ENCODE measurements at regions of chr19 and their contacts with region 1.

Region 1: GRCh38 chr19:47600246-47601179 is 8.4 kb upstream of the BICRA start:
- DNase-seq: peak; percentile 99 to 100
- H3K4me3 ChIP-seq: peak overlapping the region; percentile 55 to 69
- H3K27ac ChIP-seq: peak overlapping the region; percentile 74 to 84
- H3K4me1 ChIP-seq: peaks cover 0 to 13% of the 10 kb centered on the region in 2 donors
- H3K27me3 ChIP-seq: no peaks in the 10 kb centered on the region
- CTCF ChIP-seq: no peak

Region 2: GRCh38 chr19:46487802-46488445 is 1112.6 kb before region 1 on chr19:
- intact Hi-C with region 1: no loop called
- DNase-seq: peak in 1 of 2 donors; percentile 90
- H3K4me3 ChIP-seq: peak overlapping the region; percentile 56 to 67
- H3K27ac ChIP-seq: peak overlapping the region in 1 of 2 donors; percentile 51
- H3K4me1 ChIP-seq: peaks cover 11 to 19% of the 10 kb centered on the region in 2 donors
- H3K27me3 ChIP-seq: no peaks in the 10 kb centered on the region
- CTCF ChIP-seq: peak; percentile 93 to 99 (median 99)

Region 3: GRCh38 chr19:47273313-47273977 is 327.1 kb before region 1 on chr19:
- intact Hi-C with region 1: loop called (anchors 10 kb)
- DNase-seq: peak; percentile 77 to 97
- H3K4me3 ChIP-seq: peak overlapping the region; percentile 77 to 87
- H3K27ac ChIP-seq: peak overlapping the region; percentile 99
- H3K4me1 ChIP-seq: peaks cover 7 to 32% of the 10 kb centered on the region in 2 donors
- H3K27me3 ChIP-seq: no peaks in the 10 kb centered on the region
- CTCF ChIP-seq: no peak

Region 4: GRCh38 chr19:47573071-47574026 is 27.2 kb before region 1 on chr19 and contains the start of gene ZNF541:
- intact Hi-C with region 1: loop called (anchors 2 kb)
- DNase-seq: peak; percentile 11 to 82
- H3K4me3 ChIP-seq: peak within 1 kb of the TSS; percentile 46 to 62
- H3K27ac ChIP-seq: no peak within 1 kb of the TSS
- H3K4me1 ChIP-seq: peaks cover 0 to 4% of the 10 kb centered on the region in 2 donors
- H3K27me3 ChIP-seq: no peaks in the 10 kb centered on the region
- CTCF ChIP-seq: no peak
- total RNA-seq, gene ZNF541: not detected

Region 5: GRCh38 chr19:47663841-47664771 is 63.6 kb after region 1 on chr19:
- intact Hi-C with region 1: loop called (anchors 1 kb)
- DNase-seq: peak; percentile 73 to 95
- H3K4me3 ChIP-seq: peak overlapping the region in 1 of 2 donors; percentile 47
- H3K27ac ChIP-seq: peak overlapping the region; percentile 95 to 97
- H3K4me1 ChIP-seq: peaks cover 11 to 41% of the 10 kb centered on the region in 2 donors
- H3K27me3 ChIP-seq: no peaks in the 10 kb centered on the region
- CTCF ChIP-seq: no peak

Measured in ascending aorta (tissue), 2 donors.